ENCODE measurements at regions of chr11 and their contacts with region 1.

Region 1: DNA sequence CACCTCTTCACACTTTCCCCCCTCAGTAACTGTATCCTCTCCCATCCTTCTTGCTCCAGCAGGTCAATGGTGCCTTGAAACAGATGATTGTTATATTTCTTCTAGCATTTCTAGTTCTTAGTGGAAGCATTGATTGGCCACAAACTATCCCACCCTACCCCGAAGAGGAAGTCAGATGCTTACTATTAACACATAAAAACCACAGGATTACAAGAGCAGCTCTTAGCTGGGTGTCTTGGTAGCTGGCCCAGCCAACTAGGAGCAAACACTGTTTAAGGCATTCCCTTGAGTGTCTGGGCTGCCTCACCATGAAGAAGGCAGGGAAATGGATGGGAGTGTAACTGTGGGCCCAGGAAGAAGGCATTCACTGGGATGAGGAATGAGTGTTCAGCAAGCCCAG is 176.6 kb downstream of the GRIK4 start:
- DNase-seq: no peak
- H3K4me3 ChIP-seq: no peak overlapping the region
- H3K4me3 Mint-ChIP-seq: no peak overlapping the region
- H3K27ac ChIP-seq: no peak overlapping the region
- H3K27ac Mint-ChIP-seq: peak overlapping the region in 1 of 7 donors; percentile 2
- H3K4me1 ChIP-seq: no peaks in the 10 kb centered on the region
- H3K4me1 Mint-ChIP-seq: no peaks in the 10 kb centered on the region
- H3K27me3 ChIP-seq: no peaks in the 10 kb centered on the region
- H3K27me3 Mint-ChIP-seq: peaks cover 16 to 36% of the 10 kb centered on the region in 2 donors

Region 2: DNA sequence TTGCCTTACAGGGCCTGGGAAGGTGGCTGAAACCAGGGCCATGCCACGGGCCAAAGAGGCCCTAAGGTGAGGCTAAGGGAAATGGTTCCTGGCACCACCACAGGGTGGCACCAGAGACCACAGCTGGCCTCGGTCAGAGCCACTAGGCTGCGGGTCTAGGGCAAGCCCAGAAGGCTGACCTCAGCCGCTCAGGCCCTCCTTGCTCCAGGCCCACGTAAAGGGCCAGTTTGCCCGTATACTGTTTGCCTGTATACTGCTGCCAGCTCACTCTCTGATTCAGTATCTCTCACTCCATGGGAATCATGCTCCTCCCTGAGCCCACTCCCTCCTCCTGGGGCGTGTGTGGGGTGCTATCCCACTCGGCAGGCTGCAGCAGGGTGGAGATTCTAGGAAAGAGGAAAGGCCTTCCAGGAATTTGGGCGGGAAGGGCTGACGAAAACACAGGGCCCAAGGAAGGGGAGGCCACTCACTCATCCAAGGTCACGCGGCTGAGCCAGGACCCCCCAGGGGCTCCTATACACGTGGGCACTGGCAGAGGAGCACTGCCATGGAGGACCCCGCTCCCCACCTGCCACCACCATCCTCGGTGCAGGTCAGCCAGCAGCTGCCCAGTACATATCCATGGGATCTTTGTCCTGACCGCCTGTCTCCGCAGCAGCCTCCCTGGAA is 1021.6 kb before region 1 on chr11:
- CTCF ChIA-PET with region 1: no interaction called
- POLR2A ChIA-PET with region 1: no interaction called
- intact Hi-C with region 1: loop called (anchors 5 kb)
- DNase-seq: peak in 4 of 5 donors; percentile 40 to 52 (median 43)
- H3K4me3 ChIP-seq: no peak overlapping the region
- H3K4me3 Mint-ChIP-seq: no peak overlapping the region
- H3K27ac ChIP-seq: no peak overlapping the region
- H3K27ac Mint-ChIP-seq: no peak overlapping the region
- H3K4me1 ChIP-seq: no peaks in the 10 kb centered on the region
- H3K4me1 Mint-ChIP-seq: no peaks in the 10 kb centered on the region
- H3K27me3 ChIP-seq: no peaks in the 10 kb centered on the region
- H3K27me3 Mint-ChIP-seq: no peaks in the 10 kb centered on the region

Region 3: GRCh38 chr11:120172054-120172911 is 515.9 kb before region 1 on chr11:
- CTCF ChIA-PET with region 1: no interaction called
- POLR2A ChIA-PET with region 1: no interaction called
- intact Hi-C with region 1: loop called (anchors 5 kb)
- DNase-seq: peak in 4 of 5 donors; percentile 12 to 27 (median 22)
- H3K4me3 ChIP-seq: no peak overlapping the region
- H3K4me3 Mint-ChIP-seq: peak overlapping the region in 1 of 8 donors; percentile 21
- H3K27ac ChIP-seq: no peak overlapping the region
- H3K27ac Mint-ChIP-seq: no peak overlapping the region
- H3K4me1 ChIP-seq: peaks cover 7% of the 10 kb centered on the region
- H3K4me1 Mint-ChIP-seq: peaks cover 0 to 7% (median 5%) of the 10 kb centered on the region in 4 donors
- H3K27me3 ChIP-seq: peaks cover 26% of the 10 kb centered on the region
- H3K27me3 Mint-ChIP-seq: peaks cover 44 to 50% of the 10 kb centered on the region in 2 donors

Region 4: DNA sequence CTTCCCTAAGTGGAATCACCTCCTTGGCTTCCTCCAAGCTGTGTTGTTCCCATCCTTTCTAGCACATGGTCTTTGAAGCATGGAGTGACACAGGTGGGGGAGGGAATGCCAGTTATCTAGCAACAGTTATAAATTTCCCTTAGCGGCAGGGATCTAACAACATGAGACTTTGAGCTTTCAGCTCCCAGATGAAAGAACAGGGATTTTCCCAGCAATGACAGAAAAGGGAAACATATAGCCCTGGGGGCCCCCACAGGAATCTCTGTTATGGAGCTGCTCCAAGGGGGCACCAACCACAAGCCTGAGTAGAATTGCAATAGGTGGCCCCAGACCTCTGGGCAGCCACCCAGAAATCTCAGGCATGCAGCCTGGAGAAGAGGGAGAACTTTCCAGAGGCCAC is 13.6 kb before region 1 on chr11:
- CTCF ChIA-PET with region 1: interaction called, 13 read pairs
- POLR2A ChIA-PET with region 1: no interaction called
- intact Hi-C with region 1: no loop called
- DNase-seq: no peak
- H3K4me3 ChIP-seq: no peak overlapping the region
- H3K4me3 Mint-ChIP-seq: no peak overlapping the region
- H3K27ac ChIP-seq: no peak overlapping the region
- H3K27ac Mint-ChIP-seq: no peak overlapping the region
- H3K4me1 ChIP-seq: no peaks in the 10 kb centered on the region
- H3K4me1 Mint-ChIP-seq: no peaks in the 10 kb centered on the region
- H3K27me3 ChIP-seq: no peaks in the 10 kb centered on the region
- H3K27me3 Mint-ChIP-seq: peaks cover 13 to 16% of the 10 kb centered on the region in 2 donors

Region 5: GRCh38 chr11:120881596-120881995 is 193.4 kb after region 1 on chr11:
- CTCF ChIA-PET with region 1: no interaction called
- POLR2A ChIA-PET with region 1: no interaction called
- intact Hi-C with region 1: no loop called
- DNase-seq: no peak
- H3K4me3 ChIP-seq: no peak overlapping the region
- H3K4me3 Mint-ChIP-seq: no peak overlapping the region
- H3K27ac ChIP-seq: no peak overlapping the region
- H3K27ac Mint-ChIP-seq: no peak overlapping the region
- H3K4me1 ChIP-seq: no peaks in the 10 kb centered on the region
- H3K4me1 Mint-ChIP-seq: no peaks in the 10 kb centered on the region
- H3K27me3 ChIP-seq: no peaks in the 10 kb centered on the region
- H3K27me3 Mint-ChIP-seq: peaks cover 11 to 15% of the 10 kb centered on the region in 2 donors